Mammary epithelial cell (primary cell): ENCODE measurements at regions of chr1 and their contacts with region 1.

Region 1: GRCh38 chr1:39196244-39197215 is 8.0 kb upstream of the MACF1 start:
- DNase-seq: peak; percentile 76
- H3K4me3 ChIP-seq: no peak overlapping the region
- H3K27ac ChIP-seq: peak overlapping the region; percentile 69
- H3K4me1 ChIP-seq: peaks cover 53% of the 10 kb centered on the region
- H3K27me3 ChIP-seq: no peaks in the 10 kb centered on the region
- CTCF ChIP-seq: no peak

Region 2: DNA sequence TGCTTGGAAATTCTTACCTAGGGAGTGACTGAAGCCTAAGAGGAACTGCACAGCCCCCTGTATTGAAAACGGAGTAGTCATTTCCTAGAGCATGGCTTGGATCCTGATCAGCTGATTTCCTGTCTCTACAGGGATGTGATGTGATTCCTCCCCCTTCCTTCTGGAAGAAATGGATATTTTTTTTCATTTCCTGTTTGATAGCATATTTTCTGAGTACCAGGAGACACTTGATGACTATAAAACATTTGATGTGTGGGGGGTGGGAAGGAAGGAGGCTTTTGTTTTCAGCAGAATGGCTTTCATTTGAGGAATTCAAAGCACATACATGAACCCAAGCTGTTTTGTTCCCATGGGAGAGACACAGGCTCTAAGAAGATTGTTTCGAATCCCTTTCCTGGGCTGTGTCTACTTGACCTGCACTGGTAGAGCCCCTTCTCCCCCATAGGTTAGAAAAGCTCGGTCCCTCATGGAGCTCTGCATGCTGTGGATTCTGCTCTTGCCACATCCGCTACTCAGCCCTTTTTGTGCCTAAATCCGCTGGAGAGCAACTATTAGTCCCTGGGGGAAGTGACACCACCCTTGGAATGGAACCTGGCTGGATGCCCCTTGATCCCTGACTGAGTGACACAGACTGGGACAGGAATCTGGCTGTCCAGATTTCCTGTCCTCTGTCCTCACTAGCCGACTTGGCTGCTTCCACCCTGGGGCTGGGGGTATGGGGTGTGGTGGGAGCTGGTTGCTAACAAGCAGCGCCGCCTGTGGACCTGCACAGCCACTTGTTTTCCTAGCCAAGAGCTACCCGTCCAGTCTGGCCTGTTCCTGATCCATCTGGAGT is 63.8 kb before region 1 on chr1:
- CTCF ChIA-PET with region 1: interaction called, 10 read pairs
- dilution Hi-C with region 1: no loop called
- in situ Hi-C with region 1: no loop called
- intact Hi-C with region 1: loop called (anchors 1 kb)
- DNase-seq: peak; percentile 80
- H3K4me3 ChIP-seq: no peak overlapping the region
- H3K27ac ChIP-seq: peak overlapping the region; percentile 98
- H3K4me1 ChIP-seq: peaks cover 74% of the 10 kb centered on the region
- H3K27me3 ChIP-seq: no peaks in the 10 kb centered on the region
- CTCF ChIP-seq: peak; percentile 36 to 62

Region 3: GRCh38 chr1:39214998-39215873 is 18.7 kb after region 1 on chr1:
- CTCF ChIA-PET with region 1: interaction called, 14 read pairs
- dilution Hi-C with region 1: no loop called
- in situ Hi-C with region 1: no loop called
- intact Hi-C with region 1: loop called (anchors 2 kb)
- DNase-seq: peak; percentile 69
- H3K4me3 ChIP-seq: peak overlapping the region in 1 of 3 experiments; percentile 5
- H3K27ac ChIP-seq: peak overlapping the region; percentile 68
- H3K4me1 ChIP-seq: peaks cover 52% of the 10 kb centered on the region
- H3K27me3 ChIP-seq: no peaks in the 10 kb centered on the region
- CTCF ChIP-seq: no peak

Region 4: DNA sequence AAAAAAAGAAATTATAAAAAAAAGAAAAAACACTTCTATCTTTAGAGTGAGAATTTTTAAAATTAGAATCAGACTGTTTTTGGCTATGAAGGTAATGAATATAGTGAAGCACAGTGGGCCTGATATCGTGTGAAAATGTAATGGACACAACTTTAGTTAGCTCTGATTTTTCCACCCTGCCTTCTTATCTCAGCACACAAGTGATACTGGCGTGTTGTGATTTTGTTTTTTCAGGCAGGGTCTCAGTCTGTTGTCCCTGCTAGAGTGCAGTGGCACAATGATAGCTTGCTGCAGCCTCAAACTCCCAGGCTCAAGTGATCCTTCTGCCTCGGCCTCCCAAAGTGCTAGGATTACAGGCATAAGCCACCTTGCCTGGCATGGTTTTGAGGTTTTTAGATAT is 30.3 kb after region 1 on chr1:
- CTCF ChIA-PET with region 1: no interaction called
- dilution Hi-C with region 1: no loop called
- in situ Hi-C with region 1: no loop called
- intact Hi-C with region 1: no loop called
- DNase-seq: no peak
- H3K4me3 ChIP-seq: no peak overlapping the region
- H3K27ac ChIP-seq: no peak overlapping the region
- H3K4me1 ChIP-seq: peaks cover 19% of the 10 kb centered on the region
- H3K27me3 ChIP-seq: no peaks in the 10 kb centered on the region
- CTCF ChIP-seq: no peak

Region 5: DNA sequence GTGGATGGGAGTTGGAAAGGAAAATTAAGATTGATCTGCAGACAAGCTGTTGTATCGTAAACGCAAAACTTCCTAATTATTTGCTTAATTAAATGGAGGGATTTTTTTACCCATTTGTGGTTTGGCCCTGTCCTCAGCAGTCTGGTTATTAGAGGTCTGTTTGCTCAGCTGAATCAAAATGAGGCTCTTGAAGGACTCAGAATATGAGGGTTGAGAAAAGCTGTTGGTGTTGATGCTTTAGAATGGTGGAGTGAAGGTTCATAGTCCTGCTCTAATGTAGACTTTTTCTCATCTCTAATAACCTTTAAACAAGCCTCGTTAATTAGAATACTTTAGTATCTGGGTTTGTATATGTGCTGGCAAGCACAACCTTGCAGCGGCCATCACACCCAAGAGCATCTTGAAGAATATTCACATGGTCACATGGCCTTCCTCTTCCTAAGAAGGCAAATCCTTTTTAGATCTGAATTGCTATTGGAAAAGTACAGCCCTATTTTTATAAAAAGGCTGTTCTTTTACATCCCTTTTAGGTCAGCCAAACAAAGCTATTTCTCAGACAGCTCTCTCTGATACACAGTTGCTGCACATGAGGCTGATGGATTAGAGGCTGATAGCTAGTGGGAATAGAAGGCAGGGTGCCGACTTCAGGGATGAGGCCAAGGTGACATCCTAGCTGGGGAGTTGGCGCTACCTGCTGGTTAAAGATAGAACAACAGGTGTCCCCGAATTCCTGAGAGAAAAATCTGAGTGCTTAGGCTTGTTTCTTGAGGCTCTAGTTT is 61.8 kb after region 1 on chr1:
- CTCF ChIA-PET with region 1: interaction called, 25 read pairs
- dilution Hi-C with region 1: no loop called
- in situ Hi-C with region 1: loop called in 1 of 2 experiments (anchors 10 kb)
- intact Hi-C with region 1: loop called (anchors 1 kb)
- DNase-seq: peak; percentile 62
- H3K4me3 ChIP-seq: no peak overlapping the region
- H3K27ac ChIP-seq: no peak overlapping the region
- H3K4me1 ChIP-seq: peaks cover 11% of the 10 kb centered on the region
- H3K27me3 ChIP-seq: no peaks in the 10 kb centered on the region
- CTCF ChIP-seq: peak; percentile 85 to 88

Region 6: GRCh38 chr1:39317910-39318633 is 121.5 kb after region 1 on chr1:
- CTCF ChIA-PET with region 1: no interaction called
- dilution Hi-C with region 1: no loop called
- in situ Hi-C with region 1: no loop called
- intact Hi-C with region 1: no loop called
- DNase-seq: no peak
- H3K4me3 ChIP-seq: no peak overlapping the region
- H3K27ac ChIP-seq: no peak overlapping the region
- H3K4me1 ChIP-seq: peaks cover 2% of the 10 kb centered on the region
- H3K27me3 ChIP-seq: no peaks in the 10 kb centered on the region
- CTCF ChIP-seq: no peak

Region 7: GRCh38 chr1:39408641-39409054 is 212.1 kb after region 1 on chr1:
- CTCF ChIA-PET with region 1: interaction called, 4 read pairs
- dilution Hi-C with region 1: no loop called
- in situ Hi-C with region 1: no loop called
- intact Hi-C with region 1: loop called (anchors 1 kb)
- DNase-seq: peak; percentile 94
- H3K4me3 ChIP-seq: peak overlapping the region; percentile 63 to 81 (median 71)
- H3K27ac ChIP-seq: peak overlapping the region; percentile 76
- H3K4me1 ChIP-seq: peaks cover 57% of the 10 kb centered on the region
- H3K27me3 ChIP-seq: no peaks in the 10 kb centered on the region
- CTCF ChIP-seq: no peak

Region 8: GRCh38 chr1:39441797-39442196 is 245.3 kb after region 1 on chr1:
- CTCF ChIA-PET with region 1: no interaction called
- dilution Hi-C with region 1: no loop called
- in situ Hi-C with region 1: no loop called
- intact Hi-C with region 1: no loop called
- DNase-seq: no peak
- H3K4me3 ChIP-seq: no peak overlapping the region
- H3K27ac ChIP-seq: no peak overlapping the region
- H3K4me1 ChIP-seq: no peaks in the 10 kb centered on the region
- H3K27me3 ChIP-seq: no peaks in the 10 kb centered on the region
- CTCF ChIP-seq: no peak